Activated CD8-positive, alpha-beta T cell treated with anti-CD3 and anti-CD28 coated beads for 36 hours (primary cell): ENCODE measurements at regions of chr3 and their contacts with region 1.

Region 1: DNA sequence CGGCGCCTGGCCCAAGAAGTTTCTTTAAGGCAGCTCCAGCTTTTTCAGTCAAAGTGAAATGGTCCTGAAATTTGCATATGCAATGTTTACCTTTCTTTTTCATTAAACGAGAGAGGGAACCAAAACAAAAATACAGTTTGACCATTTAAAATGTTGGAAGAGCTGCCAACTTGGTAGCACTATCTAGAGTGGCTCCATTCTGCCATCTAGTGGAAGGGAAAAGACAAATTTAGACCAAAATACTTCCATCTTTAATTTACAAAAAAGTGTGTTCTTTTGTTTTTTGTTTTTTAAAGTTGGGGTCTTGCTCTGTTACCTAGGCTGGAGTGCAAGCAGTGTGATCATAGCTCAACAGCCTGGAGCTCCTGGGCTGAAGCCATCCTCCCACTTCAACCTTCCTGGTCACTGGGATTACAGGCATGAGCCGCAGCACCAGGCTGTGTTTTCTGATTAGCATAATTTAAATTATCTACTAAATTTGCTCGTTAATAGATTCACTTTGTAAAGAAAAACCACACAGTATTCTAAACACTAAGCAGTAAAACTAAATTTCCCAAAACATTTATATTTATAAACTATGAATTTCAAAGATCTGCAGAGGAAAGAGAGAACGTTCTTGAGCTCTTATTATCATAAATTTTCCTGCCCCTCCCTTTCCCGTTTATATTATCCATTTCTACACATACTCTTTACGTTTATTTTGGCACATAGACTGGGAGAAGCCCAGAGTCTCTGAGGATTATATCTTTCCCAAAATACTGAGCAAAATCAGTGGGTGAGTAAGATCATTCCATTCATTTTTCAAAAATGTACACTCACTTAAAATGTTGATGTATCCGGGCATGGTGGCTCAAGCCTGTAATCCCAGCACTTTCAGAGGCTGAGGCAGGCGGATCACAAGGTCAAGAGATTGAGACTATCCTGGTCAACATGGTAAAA is 15.4 kb upstream of the RFC4 start:
- DNase-seq: no peak
- ATAC-seq: no peak
- H3K4me3 Mint-ChIP-seq: no peak overlapping the region
- H3K27ac Mint-ChIP-seq: no peak overlapping the region
- H3K4me1 Mint-ChIP-seq: peaks cover 23% of the 10 kb centered on the region
- H3K27me3 Mint-ChIP-seq: peaks cover 5% of the 10 kb centered on the region
- CTCF ChIP-seq: peak; percentile 64

Region 2: GRCh38 chr3:185896561-185897011 is 925.1 kb before region 1 on chr3:
- CTCF ChIA-PET with region 1: no interaction called
- POLR2A ChIA-PET with region 1: no interaction called
- intact Hi-C with region 1: no loop called
- DNase-seq: no peak
- ATAC-seq: no peak
- H3K4me3 Mint-ChIP-seq: no peak overlapping the region
- H3K27ac Mint-ChIP-seq: no peak overlapping the region
- H3K4me1 Mint-ChIP-seq: no peaks in the 10 kb centered on the region
- H3K27me3 Mint-ChIP-seq: no peaks in the 10 kb centered on the region
- CTCF ChIP-seq: no peak

Region 3: GRCh38 chr3:186589121-186589520 is 232.6 kb before region 1 on chr3:
- CTCF ChIA-PET with region 1: interaction called, 14 read pairs
- POLR2A ChIA-PET with region 1: interaction called, 3 read pairs
- intact Hi-C with region 1: no loop called
- DNase-seq: no peak
- ATAC-seq: no peak
- H3K4me3 Mint-ChIP-seq: no peak overlapping the region
- H3K27ac Mint-ChIP-seq: no peak overlapping the region
- H3K4me1 Mint-ChIP-seq: peaks cover 20% of the 10 kb centered on the region
- H3K27me3 Mint-ChIP-seq: no peaks in the 10 kb centered on the region
- CTCF ChIP-seq: peak; percentile 19

Region 4: DNA sequence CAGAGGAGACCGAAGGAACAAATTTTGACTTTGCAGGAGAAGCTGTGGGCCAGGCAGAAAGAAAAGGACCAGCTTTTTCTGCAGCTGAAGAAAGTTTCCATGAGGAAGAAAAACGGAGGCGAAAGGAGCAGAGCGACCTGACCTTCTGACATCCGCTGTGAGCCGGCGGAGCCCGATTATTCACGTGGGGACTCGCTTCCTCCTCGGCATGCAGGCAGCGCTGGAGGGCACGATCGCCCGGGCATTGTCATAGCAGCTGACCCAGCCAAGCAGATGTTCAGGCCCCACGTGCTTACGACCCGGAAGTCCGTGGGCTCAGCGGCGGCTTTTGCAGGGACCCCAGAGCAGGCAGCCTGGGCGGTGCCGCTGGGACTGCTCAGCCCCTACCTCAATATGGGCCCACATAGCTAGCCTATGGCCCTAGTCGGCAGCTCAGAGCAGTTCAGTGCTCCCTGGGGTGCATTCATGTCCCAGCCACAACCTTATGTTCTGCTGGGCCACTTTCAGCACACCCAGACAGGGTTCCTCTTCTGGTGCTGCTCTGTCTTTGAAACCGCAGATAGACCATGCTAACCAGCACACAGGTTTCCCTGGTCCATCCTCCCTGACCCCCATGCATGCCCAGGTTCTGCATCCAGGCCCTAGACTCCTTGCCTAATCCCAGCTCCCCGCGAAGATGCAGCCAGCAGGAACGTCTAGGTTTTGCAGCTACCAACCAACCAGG is 48.8 kb before region 1 on chr3:
- CTCF ChIA-PET with region 1: interaction called, 16 read pairs
- POLR2A ChIA-PET with region 1: no interaction called
- intact Hi-C with region 1: no loop called
- DNase-seq: peak; percentile 91
- ATAC-seq: peak; percentile 94
- H3K4me3 Mint-ChIP-seq: peak overlapping the region; percentile 84
- H3K27ac Mint-ChIP-seq: peak overlapping the region; percentile 95
- H3K4me1 Mint-ChIP-seq: peaks cover 8% of the 10 kb centered on the region
- H3K27me3 Mint-ChIP-seq: no peaks in the 10 kb centered on the region
- CTCF ChIP-seq: no peak

Region 5: GRCh38 chr3:186798239-186798874 is 23.3 kb before region 1 on chr3:
- CTCF ChIA-PET with region 1: interaction called, 61 read pairs
- POLR2A ChIA-PET with region 1: interaction called, 4 read pairs
- intact Hi-C with region 1: no loop called
- DNase-seq: no peak
- ATAC-seq: no peak
- H3K4me3 Mint-ChIP-seq: no peak overlapping the region
- H3K27ac Mint-ChIP-seq: no peak overlapping the region
- H3K4me1 Mint-ChIP-seq: peaks cover 24% of the 10 kb centered on the region
- H3K27me3 Mint-ChIP-seq: no peaks in the 10 kb centered on the region
- CTCF ChIP-seq: no peak

Region 6: GRCh38 chr3:186806089-186807055 is 15.3 kb before region 1 on chr3 and contains the start of gene RFC4:
- CTCF ChIA-PET with region 1: interaction called, 61 read pairs
- POLR2A ChIA-PET with region 1: interaction called, 10 read pairs
- intact Hi-C with region 1: no loop called
- DNase-seq: peak; percentile 88
- ATAC-seq: peak; percentile 82
- H3K4me3 Mint-ChIP-seq: peak within 1 kb of the TSS; percentile 95
- H3K27ac Mint-ChIP-seq: peak within 1 kb of the TSS; percentile 96
- H3K4me1 Mint-ChIP-seq: peaks cover 25% of the 10 kb centered on the region
- H3K27me3 Mint-ChIP-seq: no peaks in the 10 kb centered on the region
- CTCF ChIP-seq: no peak
- total RNA-seq, gene RFC4: 110 to 125 TPM